Heart left ventricle (tissue), 16 donors: ENCODE measurements at regions of chr2 and their contacts with region 1.

Region 1: GRCh38 chr2:73385595-73386341 is at the start of gene ALMS1:
- DNase-seq: peak; percentile 88 to 95 (median 93)
- ATAC-seq: peak; percentile 96 to 98 (median 98)
- H3K4me3 ChIP-seq: peak within 1 kb of the TSS; percentile 45 to 97 (median 75)
- H3K27ac ChIP-seq: peak within 1 kb of the TSS; percentile 73 to 96 (median 89)
- H3K4me1 ChIP-seq: peaks cover 0 to 21% (median 10%) of the 10 kb centered on the region in 12 donors
- H3K27me3 ChIP-seq: peaks cover 0 to 6% (median 0%) of the 10 kb centered on the region in 9 donors
- CTCF ChIP-seq: peak in 8 of 12 donors; percentile 15 to 58 (median 30)
- POLR2A ChIP-seq: peak in 1 of 2 donors; percentile 33
- total RNA-seq, gene ALMS1: 7.0 to 21.4 (median 11.5) TPM

Region 2: DNA sequence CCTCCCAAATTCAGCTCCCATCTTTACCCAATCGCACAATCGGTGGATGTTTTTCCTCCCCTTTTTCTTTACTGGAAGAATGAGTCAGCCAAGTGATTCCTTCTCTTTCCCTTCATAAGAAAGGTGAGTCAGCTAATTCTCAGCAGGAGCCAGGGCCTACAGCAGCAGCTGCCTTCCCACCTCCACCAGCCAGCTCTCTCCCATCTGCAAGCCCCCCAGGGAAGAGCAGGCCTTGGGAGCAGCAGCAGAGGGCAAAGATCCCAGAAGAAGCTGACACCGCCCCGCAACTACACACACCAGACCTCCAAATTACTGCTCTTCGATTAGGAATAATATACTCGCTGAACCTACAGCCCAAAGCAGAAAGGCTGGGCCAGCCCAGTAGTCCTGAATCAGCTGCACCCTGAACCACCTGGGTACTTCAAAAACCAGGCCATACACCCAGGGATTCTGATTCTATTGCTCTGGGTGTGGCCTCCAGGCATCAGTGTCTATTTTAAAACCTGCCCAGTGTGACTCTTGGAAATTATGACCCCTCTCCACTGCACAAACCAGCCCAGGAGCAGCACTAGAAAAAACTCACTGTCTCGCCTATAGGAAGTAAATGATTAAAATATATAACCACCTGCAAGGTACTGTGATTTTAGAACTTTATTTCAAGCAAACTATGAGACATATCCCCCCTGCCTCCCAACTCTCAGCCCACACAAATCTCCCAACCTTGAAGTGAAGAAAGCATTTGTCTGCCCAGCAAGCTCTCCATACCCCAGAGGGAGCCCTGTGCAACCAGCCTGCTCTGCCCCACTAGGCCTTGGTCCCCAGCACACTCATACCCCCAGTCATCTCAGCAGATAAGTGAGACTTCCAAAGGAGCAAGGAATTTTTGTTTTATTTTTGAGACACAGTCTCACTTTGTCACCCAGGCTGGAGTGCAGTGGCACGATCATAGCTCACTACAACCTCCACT is 321.6 kb before region 1 on chr2:
- intact Hi-C with region 1: loop called in 1 of 10 experiments (anchors 10 kb)
- DNase-seq: no peak
- ATAC-seq: peak; percentile 68 to 76 (median 71)
- H3K4me3 ChIP-seq: no peak overlapping the region
- H3K27ac ChIP-seq: peak overlapping the region in 8 of 12 donors; percentile 6 to 77 (median 40)
- H3K4me1 ChIP-seq: peaks cover 0 to 30% (median 15%) of the 10 kb centered on the region in 12 donors
- H3K27me3 ChIP-seq: no peaks in the 10 kb centered on the region
- CTCF ChIP-seq: no peak
- POLR2A ChIP-seq: no peak

Region 3: DNA sequence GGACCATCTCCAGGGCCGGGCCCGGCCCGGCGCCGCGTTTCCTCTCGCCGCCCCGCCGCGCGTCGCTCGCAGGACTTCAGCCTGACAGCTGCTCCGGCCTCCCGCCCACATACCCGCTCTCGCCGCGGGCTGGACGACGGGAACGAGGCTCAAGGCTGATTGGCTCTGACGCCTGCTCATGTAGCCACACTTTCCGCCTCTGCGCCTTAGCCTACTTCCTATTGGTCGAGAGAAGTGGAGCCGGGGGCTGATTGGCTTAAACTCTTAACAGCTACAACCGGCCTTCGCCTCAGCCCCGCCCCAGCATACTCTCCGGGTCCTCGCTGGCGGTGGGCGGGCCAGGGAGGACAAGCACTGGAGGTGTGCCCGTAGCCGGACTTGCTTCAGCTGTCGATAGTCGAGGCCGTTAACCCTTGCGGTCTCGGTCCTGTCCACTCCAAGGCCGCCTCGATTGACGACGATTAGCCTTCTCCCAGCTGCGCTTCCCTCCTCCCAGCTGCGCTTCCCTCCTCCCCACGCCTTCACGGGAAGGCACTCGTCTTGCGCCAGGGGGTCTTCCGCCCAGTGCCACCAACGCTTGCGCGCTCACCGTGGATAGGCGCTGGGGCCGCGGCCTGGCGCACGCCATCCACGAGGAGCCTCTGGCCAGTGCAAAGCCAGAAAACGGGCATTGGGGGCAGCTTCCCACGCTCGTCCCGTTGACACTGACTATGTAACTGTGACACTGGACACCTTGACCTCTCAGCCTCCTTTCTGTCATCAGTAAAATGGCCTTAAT is 152.4 kb before region 1 on chr2 and contains the start of gene PRADC1:
- intact Hi-C with region 1: loop called in 5 of 10 experiments (anchors 5 kb)
- DNase-seq: peak; percentile 98 to 99 (median 99)
- ATAC-seq: peak; percentile 93 to 97 (median 96)
- H3K4me3 ChIP-seq: peak within 1 kb of the TSS; percentile 60 to 92 (median 78)
- H3K27ac ChIP-seq: peak within 1 kb of the TSS; percentile 77 to 98 (median 94)
- H3K4me1 ChIP-seq: peaks cover 0 to 43% (median 30%) of the 10 kb centered on the region in 12 donors
- H3K27me3 ChIP-seq: no peaks in the 10 kb centered on the region
- CTCF ChIP-seq: no peak
- POLR2A ChIP-seq: peak in 1 of 2 donors; percentile 85
- total RNA-seq, gene PRADC1: 57.2 to 153 (median 85.1) TPM

Region 4: GRCh38 chr2:73243884-73244570 is 141.7 kb before region 1 on chr2:
- intact Hi-C with region 1: loop called in 1 of 10 experiments (anchors 10 kb)
- DNase-seq: peak in 2 of 5 donors; percentile 46 to 61
- ATAC-seq: peak; percentile 60 to 87 (median 80)
- H3K4me3 ChIP-seq: no peak overlapping the region
- H3K27ac ChIP-seq: no peak overlapping the region
- H3K4me1 ChIP-seq: peaks cover 0 to 19% (median 4%) of the 10 kb centered on the region in 12 donors
- H3K27me3 ChIP-seq: no peaks in the 10 kb centered on the region
- CTCF ChIP-seq: no peak
- POLR2A ChIP-seq: no peak